ENCODE measurements at regions of chr4 and their contacts with region 1.

Region 1: DNA sequence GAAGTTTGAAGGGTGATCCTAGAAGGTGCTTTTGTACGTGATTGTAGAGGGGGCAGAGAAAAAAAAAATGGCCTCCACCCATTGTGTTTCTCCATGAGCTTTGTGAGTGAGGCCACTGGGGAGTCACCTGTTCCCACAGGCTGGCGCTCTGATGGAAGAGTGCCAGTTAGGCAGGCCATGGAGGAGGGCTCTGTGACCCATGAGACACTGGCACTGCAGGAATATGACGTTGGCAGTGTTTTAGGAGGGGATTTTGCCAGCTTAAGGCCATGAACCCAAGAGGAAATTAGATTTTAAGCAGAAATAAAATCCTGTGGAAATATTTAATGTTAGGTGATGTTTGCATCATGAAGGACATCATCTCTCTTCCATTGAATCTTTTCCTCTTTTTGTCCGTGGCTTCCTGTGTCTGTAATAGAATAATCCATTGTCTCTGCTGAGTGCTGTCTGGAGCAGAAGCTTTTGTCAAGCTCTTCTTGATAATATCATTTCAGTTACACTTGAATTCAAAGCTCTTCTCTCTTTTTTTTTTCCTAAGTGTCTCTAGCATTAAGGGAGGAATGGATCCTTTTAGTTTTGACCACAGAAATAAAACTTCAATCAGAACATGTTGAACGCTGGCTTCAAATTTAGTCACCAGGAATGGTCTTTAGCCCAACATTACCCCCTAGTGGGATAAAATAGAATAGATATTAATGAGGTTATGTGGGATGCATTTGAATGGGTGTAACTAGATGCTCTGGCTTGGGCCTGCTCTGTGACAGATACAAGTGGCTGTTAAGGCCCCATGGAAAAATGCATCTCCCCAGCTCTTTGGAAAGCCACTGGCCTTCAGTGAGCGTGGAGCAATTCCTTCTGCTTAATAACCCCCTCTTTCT is 41.0 kb upstream of the UCP1 start:
- DNase-seq: no peak
- H3K4me3 Mint-ChIP-seq: no peak overlapping the region
- H3K27ac Mint-ChIP-seq: no peak overlapping the region
- H3K4me1 Mint-ChIP-seq: peaks cover 1% of the 10 kb centered on the region
- H3K27me3 Mint-ChIP-seq: peaks cover 6% of the 10 kb centered on the region

Region 2: GRCh38 chr4:140326395-140326993 is 283.3 kb before region 1 on chr4:
- CTCF ChIA-PET with region 1: interaction called, 11 read pairs
- intact Hi-C with region 1: loop called (anchors 1 kb)
- DNase-seq: peak; percentile 32
- H3K4me3 Mint-ChIP-seq: no peak overlapping the region
- H3K27ac Mint-ChIP-seq: no peak overlapping the region
- H3K4me1 Mint-ChIP-seq: no peaks in the 10 kb centered on the region
- H3K27me3 Mint-ChIP-seq: no peaks in the 10 kb centered on the region

Region 3: GRCh38 chr4:140427106-140427961 is 182.5 kb before region 1 on chr4 and contains the start of gene CLGN:
- CTCF ChIA-PET with region 1: no interaction called
- intact Hi-C with region 1: loop called (anchors 1 kb)
- DNase-seq: peak; percentile 51
- H3K4me3 Mint-ChIP-seq: peak within 1 kb of the TSS; percentile 76
- H3K27ac Mint-ChIP-seq: no peak within 1 kb of the TSS
- H3K4me1 Mint-ChIP-seq: peaks cover 5% of the 10 kb centered on the region
- H3K27me3 Mint-ChIP-seq: peaks cover 44% of the 10 kb centered on the region
- total RNA-seq, gene CLGN: 0.10 TPM in 1 of 2 experiments, not detected in the other